ENCODE measurements at regions of chr22 and their contacts with region 1.

Region 1: GRCh38 chr22:35840302-35840739 is 122.6 kb downstream of the APOL5 start:
- DNase-seq: no peak
- H3K4me3 ChIP-seq: no peak overlapping the region
- H3K4me3 Mint-ChIP-seq: peak overlapping the region in 1 of 7 donors; percentile 16
- H3K27ac ChIP-seq: no peak overlapping the region
- H3K27ac Mint-ChIP-seq: no peak overlapping the region
- H3K4me1 ChIP-seq: no peaks in the 10 kb centered on the region
- H3K4me1 Mint-ChIP-seq: peaks cover 4 to 19% (median 14%) of the 10 kb centered on the region in 3 donors
- H3K27me3 ChIP-seq: no peaks in the 10 kb centered on the region
- H3K27me3 Mint-ChIP-seq: peaks cover 9 to 36% of the 10 kb centered on the region in 2 donors

Region 2: GRCh38 chr22:35821654-35822053 is 18.7 kb before region 1 on chr22:
- CTCF ChIA-PET with region 1: no interaction called
- POLR2A ChIA-PET with region 1: interaction called, 12 read pairs
- DNase-seq: no peak
- H3K4me3 ChIP-seq: no peak overlapping the region
- H3K4me3 Mint-ChIP-seq: no peak overlapping the region
- H3K27ac ChIP-seq: no peak overlapping the region
- H3K27ac Mint-ChIP-seq: no peak overlapping the region
- H3K4me1 ChIP-seq: no peaks in the 10 kb centered on the region
- H3K4me1 Mint-ChIP-seq: no peaks in the 10 kb centered on the region
- H3K27me3 ChIP-seq: no peaks in the 10 kb centered on the region
- H3K27me3 Mint-ChIP-seq: peaks cover 2 to 27% of the 10 kb centered on the region in 2 donors

Region 3: DNA sequence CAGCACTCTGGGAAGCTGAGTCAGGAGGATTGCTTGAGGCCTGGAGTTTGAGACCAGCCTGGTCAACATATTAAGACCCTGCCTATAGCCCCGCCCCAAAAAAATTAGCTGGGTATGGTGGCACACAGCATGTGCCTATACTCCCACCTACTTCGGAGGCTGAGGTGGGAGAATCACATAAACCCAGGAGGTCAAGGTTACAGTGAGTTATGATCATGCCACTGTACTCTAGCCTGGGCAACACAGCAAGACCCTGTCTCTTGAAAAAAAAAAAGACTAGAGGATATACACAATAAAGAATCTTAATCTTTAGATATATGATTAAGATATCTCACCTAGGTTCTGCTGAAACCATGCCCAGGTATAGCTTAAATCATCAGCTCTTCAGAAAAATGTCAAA is 14.0 kb after region 1 on chr22:
- CTCF ChIA-PET with region 1: no interaction called
- POLR2A ChIA-PET with region 1: no interaction called
- DNase-seq: no peak
- H3K4me3 ChIP-seq: no peak overlapping the region
- H3K4me3 Mint-ChIP-seq: no peak overlapping the region
- H3K27ac ChIP-seq: no peak overlapping the region
- H3K27ac Mint-ChIP-seq: no peak overlapping the region
- H3K4me1 ChIP-seq: no peaks in the 10 kb centered on the region
- H3K4me1 Mint-ChIP-seq: no peaks in the 10 kb centered on the region
- H3K27me3 ChIP-seq: no peaks in the 10 kb centered on the region
- H3K27me3 Mint-ChIP-seq: peaks cover 4 to 5% of the 10 kb centered on the region in 2 donors

Region 4: GRCh38 chr22:35866651-35867050 is 26.3 kb after region 1 on chr22:
- CTCF ChIA-PET with region 1: no interaction called
- POLR2A ChIA-PET with region 1: interaction called, 11 read pairs
- DNase-seq: no peak
- H3K4me3 ChIP-seq: no peak overlapping the region
- H3K4me3 Mint-ChIP-seq: no peak overlapping the region
- H3K27ac ChIP-seq: no peak overlapping the region
- H3K27ac Mint-ChIP-seq: no peak overlapping the region
- H3K4me1 ChIP-seq: no peaks in the 10 kb centered on the region
- H3K4me1 Mint-ChIP-seq: no peaks in the 10 kb centered on the region
- H3K27me3 ChIP-seq: no peaks in the 10 kb centered on the region
- H3K27me3 Mint-ChIP-seq: peaks cover 0 to 15% of the 10 kb centered on the region in 2 donors